ENCODE measurements at regions of chr9 and their contacts with region 1.

Region 1: GRCh38 chr9:124040935-124041816 is 29.6 kb downstream of the LHX2 start:
- DNase-seq: no peak
- H3K4me3 ChIP-seq: peak overlapping the region; percentile 42 to 57 (median 49)
- H3K27ac ChIP-seq: no peak overlapping the region
- H3K4me1 ChIP-seq: peaks cover 10 to 38% (median 34%) of the 10 kb centered on the region in 4 donors
- H3K27me3 ChIP-seq: peaks cover 4 to 96% (median 24%) of the 10 kb centered on the region in 4 donors
- CTCF ChIP-seq: peak; percentile 87 to 99 (median 98)
- EP300 ChIP-seq: no peak
- POLR2A ChIP-seq: no peak

Region 2: DNA sequence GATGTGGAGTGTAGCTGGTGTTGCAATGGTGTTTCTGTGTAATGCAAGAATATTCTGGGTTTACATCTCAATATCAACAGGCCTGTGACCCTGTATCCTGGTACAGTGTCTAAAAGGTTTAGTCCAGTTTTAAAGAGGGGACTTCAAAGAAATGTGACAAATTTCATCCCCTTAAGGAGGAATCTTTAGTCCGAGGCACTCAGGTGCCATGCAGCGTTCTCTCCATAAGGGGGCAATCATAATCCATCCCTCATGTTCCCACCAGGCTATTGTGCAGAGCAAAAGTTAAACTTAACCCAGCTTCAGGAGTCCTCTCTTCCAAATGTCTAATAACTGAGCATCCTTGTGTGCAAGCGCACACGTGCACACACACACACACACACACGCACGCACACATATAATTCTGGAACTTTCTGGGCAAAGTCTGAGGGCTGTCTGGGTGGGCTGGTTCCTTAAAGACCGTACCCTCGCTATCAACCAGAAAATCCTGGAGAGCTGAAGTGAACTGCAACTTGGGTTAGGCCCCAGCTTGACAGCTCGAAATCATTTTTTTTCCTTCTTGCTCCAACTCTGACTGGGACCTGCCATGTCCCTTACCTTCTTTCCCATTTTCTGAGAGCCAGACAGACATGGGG is 639.2 kb before region 1 on chr9:
- intact Hi-C with region 1: loop called (anchors 5 kb)
- DNase-seq: no peak
- H3K4me3 ChIP-seq: no peak overlapping the region
- H3K27ac ChIP-seq: no peak overlapping the region
- H3K4me1 ChIP-seq: peaks cover 0 to 6% (median 2%) of the 10 kb centered on the region in 4 donors
- H3K27me3 ChIP-seq: no peaks in the 10 kb centered on the region
- CTCF ChIP-seq: peak; percentile 52 to 72 (median 58)
- EP300 ChIP-seq: no peak
- POLR2A ChIP-seq: no peak

Region 3: GRCh38 chr9:123544007-123544827 is 497.0 kb before region 1 on chr9:
- intact Hi-C with region 1: loop called (anchors 1 kb)
- DNase-seq: no peak
- H3K4me3 ChIP-seq: no peak overlapping the region
- H3K27ac ChIP-seq: no peak overlapping the region
- H3K4me1 ChIP-seq: peaks cover 7 to 21% (median 20%) of the 10 kb centered on the region in 4 donors
- H3K27me3 ChIP-seq: no peaks in the 10 kb centered on the region
- CTCF ChIP-seq: peak; percentile 73 to 76 (median 75)
- EP300 ChIP-seq: no peak
- POLR2A ChIP-seq: no peak

Region 4: DNA sequence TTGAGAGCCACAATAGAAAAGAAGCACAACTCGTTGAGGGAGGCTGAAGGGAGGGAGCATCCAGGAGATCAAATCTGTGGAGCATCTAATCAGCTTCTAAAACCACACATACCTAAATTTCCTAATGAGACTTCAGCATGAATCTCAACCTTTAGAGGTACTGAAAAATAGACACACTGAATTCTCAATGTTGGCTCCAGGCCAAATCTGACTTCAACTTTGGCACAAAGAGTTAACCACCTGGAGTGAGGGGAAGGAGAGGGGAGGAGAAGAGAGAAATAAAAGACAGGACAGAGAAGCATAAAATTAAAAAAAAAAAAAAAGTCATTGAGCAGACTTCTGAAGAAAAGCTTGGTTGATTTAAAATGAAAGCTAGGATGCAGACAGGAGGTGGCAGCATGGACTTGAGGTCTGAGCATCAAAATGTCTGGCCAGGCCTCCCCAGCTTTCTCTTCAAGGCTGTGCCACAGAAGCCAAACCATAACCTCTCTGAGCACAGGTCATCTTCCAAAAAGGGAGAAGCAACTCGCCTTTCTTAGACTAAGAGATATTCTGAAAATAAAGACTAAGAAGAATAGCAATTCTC is 316.9 kb before region 1 on chr9:
- intact Hi-C with region 1: loop called (anchors 2 kb)
- DNase-seq: no peak
- H3K4me3 ChIP-seq: no peak overlapping the region
- H3K27ac ChIP-seq: no peak overlapping the region
- H3K4me1 ChIP-seq: peaks cover 0 to 16% (median 14%) of the 10 kb centered on the region in 4 donors
- H3K27me3 ChIP-seq: no peaks in the 10 kb centered on the region
- CTCF ChIP-seq: peak; percentile 7 to 19 (median 10)
- EP300 ChIP-seq: no peak
- POLR2A ChIP-seq: no peak